ENCODE measurements at regions of chr10 and their contacts with region 1.

Region 1: DNA sequence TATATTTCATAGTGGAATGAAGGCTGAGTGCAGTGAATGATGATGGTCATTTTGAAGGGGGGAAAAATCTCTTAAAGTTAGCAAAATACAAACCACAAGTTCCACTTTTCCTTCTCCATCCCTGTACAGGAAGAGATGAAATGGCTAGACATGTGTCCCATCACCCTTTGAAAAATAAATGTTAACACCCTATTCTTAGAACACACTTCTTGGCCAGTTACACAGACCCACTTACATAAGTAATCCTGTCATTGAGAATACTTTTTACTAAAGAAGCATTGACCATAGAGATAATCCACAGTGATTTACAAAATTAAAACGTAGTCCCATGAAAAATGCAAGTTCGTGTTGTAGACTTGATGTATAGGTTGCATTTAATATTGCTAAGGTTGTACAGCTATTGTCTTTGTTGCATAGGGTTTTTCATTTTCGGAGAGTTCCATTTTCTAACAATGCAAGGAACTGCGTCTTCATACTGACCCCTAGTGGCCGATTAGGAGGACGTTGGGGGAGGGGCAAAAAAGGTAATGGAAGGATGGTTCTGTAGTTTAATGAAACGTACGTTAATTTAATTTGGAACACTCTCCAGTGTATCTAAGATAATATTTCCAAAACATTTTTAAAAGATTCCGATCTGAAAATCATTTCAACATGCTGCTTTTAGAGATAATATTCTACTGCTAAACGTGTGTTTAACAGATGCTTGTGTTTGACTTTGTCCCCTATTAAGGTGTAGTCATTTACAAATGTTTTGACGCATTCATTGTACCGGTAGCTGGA is 60.9 kb downstream of the ARMC3 start:
- DNase-seq: peak; percentile 92
- H3K4me3 Mint-ChIP-seq: no peak overlapping the region
- H3K27ac Mint-ChIP-seq: no peak overlapping the region
- H3K4me1 Mint-ChIP-seq: peaks cover 8% of the 10 kb centered on the region
- H3K27me3 Mint-ChIP-seq: peaks cover 20% of the 10 kb centered on the region

Region 2: DNA sequence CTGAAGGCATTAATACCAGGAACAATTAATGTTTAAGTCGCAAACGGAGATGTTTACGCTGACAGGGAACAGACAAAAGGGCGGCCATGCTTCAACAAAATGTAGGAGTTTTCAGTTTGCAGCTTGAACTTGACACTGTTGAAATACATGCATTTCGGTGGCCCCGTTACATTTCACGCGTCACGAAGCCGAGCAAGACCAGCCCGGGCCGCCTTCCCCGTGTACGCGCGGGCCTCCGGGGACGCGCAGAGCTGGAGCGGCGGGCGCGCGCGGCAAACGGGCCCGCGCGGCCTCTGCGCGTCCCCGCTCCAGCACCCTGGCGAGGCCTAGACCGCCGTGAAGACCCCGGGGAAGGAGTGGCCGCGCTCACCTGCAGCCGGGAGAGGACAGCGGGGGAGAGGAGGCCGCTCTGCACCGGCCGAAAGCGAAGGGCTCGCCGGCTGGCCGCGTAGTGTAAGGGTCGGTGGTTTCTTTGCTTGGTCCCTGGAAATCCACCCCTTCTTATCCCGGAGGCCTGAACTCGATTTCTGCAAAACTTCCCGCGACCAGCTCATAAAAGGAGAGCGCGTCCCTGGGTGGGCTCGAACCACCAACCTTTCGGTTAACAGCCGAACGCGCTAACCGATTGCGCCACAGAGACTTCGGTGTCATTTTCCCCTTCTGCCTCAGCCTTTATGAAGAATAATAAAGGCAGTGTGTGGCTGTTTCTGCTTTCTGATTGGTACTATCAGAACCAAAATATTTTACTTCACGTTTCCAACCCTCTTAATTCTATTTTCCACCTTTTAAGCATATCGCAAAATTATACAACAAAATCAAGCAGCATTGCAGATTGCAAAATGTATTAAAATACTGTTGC is 759.6 kb before region 1 on chr10:
- intact Hi-C with region 1: loop called (anchors 1 kb)
- DNase-seq: peak; percentile 96
- H3K4me3 Mint-ChIP-seq: peak overlapping the region; percentile 84
- H3K27ac Mint-ChIP-seq: peak overlapping the region; percentile 92
- H3K4me1 Mint-ChIP-seq: peaks cover 21% of the 10 kb centered on the region
- H3K27me3 Mint-ChIP-seq: peaks cover 14% of the 10 kb centered on the region

Region 3: DNA sequence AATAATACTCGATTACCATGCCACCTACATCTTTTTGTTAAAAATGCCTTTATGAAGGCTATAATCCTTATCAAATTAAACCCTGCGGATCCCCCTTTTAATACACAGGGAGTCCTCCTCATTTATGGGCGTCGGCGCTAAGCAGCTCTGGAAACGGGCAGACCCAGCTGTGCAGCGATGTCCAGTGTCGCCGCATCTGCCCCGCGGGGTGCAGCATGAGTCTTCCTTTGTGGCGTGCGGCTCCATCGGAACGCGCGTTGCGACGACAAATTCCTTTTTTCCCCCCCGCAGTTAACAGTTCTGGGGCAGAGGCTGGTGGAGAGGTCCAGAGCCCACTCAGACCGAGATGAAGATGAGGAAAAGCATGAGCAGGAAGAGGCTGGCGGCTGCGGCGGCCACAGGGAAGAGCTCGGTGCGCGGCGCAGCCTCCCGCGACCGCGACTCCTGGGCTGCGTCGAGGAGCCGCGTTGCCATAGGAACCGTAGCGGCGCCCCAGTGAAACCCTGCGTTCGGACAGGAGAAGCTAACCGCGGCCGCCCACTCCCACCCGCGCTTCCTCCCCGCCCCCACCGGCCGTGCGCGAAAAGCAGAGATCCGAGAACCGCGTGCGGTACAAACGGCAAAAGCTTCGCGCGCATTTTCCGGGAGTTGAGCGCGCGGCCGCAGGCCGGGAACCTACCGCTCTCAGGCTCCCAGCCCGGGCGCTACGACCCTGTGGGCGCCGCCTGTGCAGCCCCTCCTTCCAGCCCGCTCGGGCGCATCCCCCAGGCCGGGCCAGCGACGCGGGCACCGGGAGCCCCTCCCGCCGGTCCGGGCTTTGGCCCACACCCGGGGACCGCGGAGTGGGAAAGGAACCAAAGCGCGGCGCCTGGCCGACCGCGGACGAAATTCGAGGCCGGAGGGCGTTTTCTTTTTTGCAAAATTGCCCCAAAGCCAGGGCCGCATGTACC is 512.8 kb before region 1 on chr10:
- intact Hi-C with region 1: loop called (anchors 5 kb)
- DNase-seq: peak; percentile 79
- H3K4me3 Mint-ChIP-seq: peak overlapping the region; percentile 86
- H3K27ac Mint-ChIP-seq: peak overlapping the region; percentile 86
- H3K4me1 Mint-ChIP-seq: peaks cover 11% of the 10 kb centered on the region
- H3K27me3 Mint-ChIP-seq: peaks cover 57% of the 10 kb centered on the region

Region 4: DNA sequence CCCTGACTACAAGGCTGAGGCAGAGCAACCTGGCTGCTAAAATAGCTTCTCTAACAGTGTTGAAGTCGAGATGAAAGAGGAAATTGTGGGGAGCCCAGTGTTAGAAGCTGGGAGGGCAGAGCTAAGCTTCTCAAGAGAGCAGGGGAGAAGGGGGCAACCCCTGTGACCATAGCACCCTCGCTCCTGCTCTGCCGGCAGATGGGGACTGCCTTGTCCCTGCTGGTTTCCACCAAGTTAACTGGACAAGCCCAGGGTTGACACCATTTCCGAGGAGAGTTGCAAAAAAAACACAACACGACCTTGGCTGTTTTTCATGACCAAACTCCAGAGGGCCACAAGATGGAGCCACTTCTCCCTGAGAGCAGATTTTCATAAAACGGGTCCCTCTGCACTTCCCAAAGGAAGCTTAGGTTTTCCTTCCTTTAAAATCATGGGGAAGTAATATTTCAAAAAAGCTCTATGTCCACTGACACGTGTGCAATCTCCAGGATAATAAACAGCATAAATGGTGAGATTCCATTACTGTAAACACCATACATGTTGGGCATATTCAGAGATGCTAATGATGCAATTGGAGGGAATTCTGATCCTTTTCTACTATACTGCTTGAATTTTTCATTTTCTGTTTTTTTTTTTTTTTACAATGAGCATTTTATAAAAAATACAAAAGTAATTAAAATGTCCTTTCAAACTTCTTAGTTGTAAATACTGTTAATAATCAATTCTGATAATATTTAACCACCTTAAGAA is 414.8 kb before region 1 on chr10:
- intact Hi-C with region 1: loop called (anchors 5 kb)
- DNase-seq: no peak
- H3K4me3 Mint-ChIP-seq: no peak overlapping the region
- H3K27ac Mint-ChIP-seq: no peak overlapping the region
- H3K4me1 Mint-ChIP-seq: peaks cover 36% of the 10 kb centered on the region
- H3K27me3 Mint-ChIP-seq: no peaks in the 10 kb centered on the region